ENCODE measurements at regions of chr2 and their contacts with region 1.

Region 1: GRCh38 chr2:13193898-13194297 is 477.2 kb downstream of the TRIB2 start:
- DNase-seq: peak; percentile 50
- ATAC-seq: peak; percentile 59
- H3K4me3 ChIP-seq: no peak overlapping the region
- H3K27ac ChIP-seq: no peak overlapping the region
- H3K4me1 ChIP-seq: no peaks in the 10 kb centered on the region
- H3K27me3 ChIP-seq: peaks cover 49% of the 10 kb centered on the region
- CTCF ChIP-seq: peak; percentile 71

Region 2: GRCh38 chr2:12948961-12949353 is 244.9 kb before region 1 on chr2:
- CTCF ChIA-PET with region 1: no interaction called
- POLR2A ChIA-PET with region 1: no interaction called
- intact Hi-C with region 1: no loop called
- DNase-seq: no peak
- ATAC-seq: no peak
- H3K4me3 ChIP-seq: no peak overlapping the region
- H3K27ac ChIP-seq: peak overlapping the region; percentile 42
- H3K4me1 ChIP-seq: peaks cover 30% of the 10 kb centered on the region
- H3K27me3 ChIP-seq: no peaks in the 10 kb centered on the region
- CTCF ChIP-seq: no peak

Region 3: GRCh38 chr2:13056259-13056843 is 137.5 kb before region 1 on chr2:
- CTCF ChIA-PET with region 1: no interaction called
- POLR2A ChIA-PET with region 1: no interaction called
- intact Hi-C with region 1: loop called (anchors 5 kb)
- DNase-seq: peak; percentile 41
- ATAC-seq: no peak
- H3K4me3 ChIP-seq: no peak overlapping the region
- H3K27ac ChIP-seq: no peak overlapping the region
- H3K4me1 ChIP-seq: no peaks in the 10 kb centered on the region
- H3K27me3 ChIP-seq: peaks cover 37% of the 10 kb centered on the region
- CTCF ChIP-seq: peak; percentile 69

Region 4: DNA sequence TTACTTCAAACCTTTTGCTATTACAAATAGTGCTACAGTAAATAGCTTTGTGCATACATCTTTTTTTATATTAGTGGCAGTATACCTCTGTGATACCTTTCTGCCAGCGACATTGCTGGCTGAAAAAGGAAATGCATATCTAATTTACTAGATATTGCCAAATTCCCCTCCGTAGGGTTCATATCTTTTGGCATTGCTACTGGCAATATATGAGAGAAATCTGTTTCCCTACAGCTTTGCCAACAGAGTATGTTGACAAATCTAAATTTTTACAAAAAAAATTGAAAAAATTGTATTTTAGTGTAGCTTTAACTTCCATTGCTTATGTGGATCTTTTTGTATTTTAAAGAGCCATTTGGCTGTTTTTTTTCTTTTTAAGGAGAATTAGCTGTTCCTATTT is 50.4 kb before region 1 on chr2:
- CTCF ChIA-PET with region 1: no interaction called
- POLR2A ChIA-PET with region 1: no interaction called
- intact Hi-C with region 1: no loop called
- DNase-seq: no peak
- ATAC-seq: no peak
- H3K4me3 ChIP-seq: no peak overlapping the region
- H3K27ac ChIP-seq: no peak overlapping the region
- H3K4me1 ChIP-seq: no peaks in the 10 kb centered on the region
- H3K27me3 ChIP-seq: peaks cover 11% of the 10 kb centered on the region; the same call in 1 of the 2 replicates
- CTCF ChIP-seq: no peak

Region 5: DNA sequence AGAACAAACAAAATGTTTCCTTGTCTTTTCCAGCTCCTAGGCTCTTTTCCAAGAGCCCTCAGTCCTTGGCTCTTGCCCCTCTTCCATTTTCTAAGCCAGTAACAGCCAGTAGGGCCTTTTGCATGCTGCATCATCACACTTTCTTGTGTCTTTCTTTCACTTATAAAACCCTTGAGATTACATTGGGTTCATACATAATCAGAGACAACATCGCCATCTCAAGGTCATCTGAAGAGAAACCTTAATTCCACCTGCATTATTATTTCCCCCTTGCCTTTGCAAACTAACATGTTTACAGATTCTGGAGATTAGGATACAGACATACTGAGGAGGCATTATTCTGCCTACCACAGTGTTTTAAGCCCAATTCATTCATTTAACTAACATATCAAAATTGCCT is 220.1 kb after region 1 on chr2:
- CTCF ChIA-PET with region 1: no interaction called
- POLR2A ChIA-PET with region 1: no interaction called
- intact Hi-C with region 1: loop called (anchors 2 kb)
- DNase-seq: no peak
- ATAC-seq: no peak
- H3K4me3 ChIP-seq: no peak overlapping the region
- H3K27ac ChIP-seq: no peak overlapping the region
- H3K4me1 ChIP-seq: no peaks in the 10 kb centered on the region
- H3K27me3 ChIP-seq: no peaks in the 10 kb centered on the region
- CTCF ChIP-seq: no peak

Region 6: GRCh38 chr2:14944562-14945346 is 1750.9 kb after region 1 on chr2:
- CTCF ChIA-PET with region 1: no interaction called
- POLR2A ChIA-PET with region 1: no interaction called
- intact Hi-C with region 1: loop called (anchors 2 kb)
- DNase-seq: peak; percentile 64
- ATAC-seq: peak; percentile 81
- H3K4me3 ChIP-seq: no peak overlapping the region
- H3K27ac ChIP-seq: no peak overlapping the region
- H3K4me1 ChIP-seq: no peaks in the 10 kb centered on the region
- H3K27me3 ChIP-seq: no peaks in the 10 kb centered on the region
- CTCF ChIP-seq: peak; percentile 86